BJ (cell line): ENCODE measurements at regions of chr19 and their contacts with region 1.

Region 1: DNA sequence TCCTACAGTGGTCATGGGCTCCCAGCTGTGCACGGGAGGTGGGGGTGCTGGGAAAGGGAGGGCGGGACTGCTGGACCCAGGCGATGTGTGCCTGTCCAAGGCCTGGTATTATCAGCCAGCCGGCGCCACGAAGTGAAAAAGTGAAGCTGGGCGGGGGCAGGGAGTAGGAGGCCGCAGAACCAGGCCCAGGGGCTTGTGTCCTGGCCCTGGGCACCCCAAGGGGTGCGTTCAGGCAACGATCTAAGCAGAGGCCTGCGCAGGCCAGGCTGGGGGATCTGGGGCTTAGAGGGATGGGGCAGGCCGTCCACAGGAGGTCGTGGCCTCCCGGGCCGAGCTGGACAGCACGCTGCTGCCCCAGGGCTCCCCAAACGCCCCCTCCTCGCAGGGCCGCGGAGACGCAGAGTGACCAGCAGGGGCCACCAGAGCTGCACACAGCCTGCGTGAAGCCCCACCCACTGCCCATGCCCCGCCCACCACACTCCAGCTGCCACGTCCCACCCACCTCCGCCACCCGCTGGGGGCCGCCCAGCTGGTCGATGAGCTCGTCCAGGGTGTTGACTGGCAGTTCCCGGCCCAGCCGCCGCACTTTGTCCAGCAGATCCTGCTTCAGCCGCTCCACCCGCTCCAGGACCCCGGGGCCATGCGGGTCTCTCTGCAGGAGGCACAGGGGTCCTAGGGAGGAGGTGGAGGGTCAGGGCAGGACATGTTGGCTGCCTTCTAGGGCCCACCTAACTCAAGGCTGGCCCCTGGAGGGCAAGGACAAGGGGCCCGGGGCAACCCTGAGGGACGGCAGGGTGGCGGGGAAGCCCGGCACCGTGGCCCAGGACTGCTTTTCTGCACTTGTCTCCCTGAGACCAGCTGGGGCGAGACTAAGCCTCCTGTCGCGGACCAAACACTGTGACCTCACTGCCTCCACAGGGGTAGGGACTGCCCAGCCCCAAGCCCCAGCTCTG is 9.5 kb downstream of the GPX4 start:
- DNase-seq: peak; percentile 36
- H3K4me3 ChIP-seq: no peak overlapping the region
- H3K27me3 ChIP-seq: no peaks in the 10 kb centered on the region
- CTCF ChIP-seq: peak; percentile 85

Region 2: DNA sequence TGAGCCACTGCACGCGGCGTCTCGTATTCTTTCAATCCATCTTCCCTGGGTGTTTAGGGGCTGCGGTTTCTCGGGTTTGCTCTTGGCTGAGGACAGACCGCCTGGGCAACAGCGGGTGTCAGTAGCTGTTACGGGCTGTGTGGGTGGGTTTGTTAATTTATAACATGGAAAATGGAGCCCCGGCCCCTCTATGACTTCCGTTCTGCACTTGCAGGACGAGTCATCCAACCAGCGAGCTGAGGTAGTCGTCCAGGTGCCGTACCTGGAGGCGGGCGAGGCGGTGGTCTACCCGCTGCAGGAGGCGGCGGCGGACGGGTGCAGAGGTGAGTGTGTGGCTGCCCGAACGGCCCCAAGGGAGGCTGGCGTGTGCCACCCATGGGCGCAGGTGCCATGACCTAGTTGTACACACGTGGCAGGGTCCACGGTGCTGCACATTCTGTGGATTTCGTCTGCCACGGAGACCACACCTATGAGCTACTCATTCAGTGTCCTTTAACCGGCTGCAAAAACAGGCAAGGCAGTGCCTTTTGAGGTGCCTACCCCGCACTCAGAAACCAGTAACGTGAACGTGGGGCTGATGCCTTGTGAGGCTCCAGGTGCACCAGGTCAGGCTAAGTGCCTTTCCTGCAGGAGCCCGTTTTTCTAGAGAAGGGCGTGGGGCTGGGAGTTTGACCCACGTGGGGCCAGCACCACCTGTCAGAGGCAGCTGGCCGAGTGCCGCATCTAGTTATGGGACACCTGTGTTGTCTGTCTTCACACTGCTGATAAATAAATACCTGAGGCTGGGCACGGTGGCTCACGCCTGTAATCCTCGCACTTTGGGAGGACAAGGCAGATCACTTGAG is 29.1 kb before region 1 on chr19:
- CTCF ChIA-PET with region 1: no interaction called
- POLR2A ChIA-PET with region 1: no interaction called
- DNase-seq: no peak
- H3K4me3 ChIP-seq: no peak overlapping the region
- H3K27me3 ChIP-seq: no peaks in the 10 kb centered on the region
- CTCF ChIP-seq: no peak

Region 3: DNA sequence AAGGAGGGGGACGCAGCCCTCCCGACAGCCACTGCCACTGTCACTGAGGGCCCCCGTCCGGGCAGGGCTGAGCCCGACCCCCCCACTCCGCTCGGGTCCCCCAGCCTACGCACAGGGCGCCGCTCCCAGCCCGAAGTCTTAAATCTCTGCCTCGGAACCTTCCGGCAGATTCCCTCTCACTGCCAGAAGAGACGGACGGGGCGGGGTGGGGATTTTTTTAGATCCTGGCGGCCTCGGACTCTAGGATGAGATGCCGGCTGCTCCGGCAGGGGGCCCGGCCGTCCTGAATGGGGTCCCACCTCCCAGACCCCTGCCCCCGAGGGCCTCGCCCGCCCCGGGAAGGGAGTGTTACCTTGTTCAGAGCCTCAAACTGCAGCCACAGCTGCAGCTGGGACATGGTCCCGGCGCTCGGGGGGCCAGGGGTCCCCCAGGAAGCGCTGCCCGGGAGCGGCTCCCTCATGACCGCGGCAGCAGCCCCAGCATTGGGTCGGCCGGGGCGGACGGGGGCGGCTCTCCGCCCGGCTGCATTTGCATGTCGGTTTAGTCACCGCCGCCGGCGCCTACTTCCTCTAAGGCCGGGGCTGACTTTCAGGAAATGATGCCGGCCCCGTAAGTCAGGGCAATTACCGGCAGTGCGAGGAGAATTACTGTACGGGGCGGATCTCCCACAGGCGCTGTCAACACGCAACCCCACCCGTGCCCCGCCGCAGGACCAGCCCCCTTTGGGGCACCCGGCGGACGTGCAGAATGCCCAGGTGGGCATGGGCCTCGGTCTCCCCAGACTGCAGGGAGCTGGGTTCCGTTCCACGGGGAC is 18.6 kb after region 1 on chr19:
- CTCF ChIA-PET with region 1: interaction called, 13 read pairs
- POLR2A ChIA-PET with region 1: no interaction called
- DNase-seq: peak; percentile 52
- H3K4me3 ChIP-seq: peak overlapping the region; percentile 88
- H3K27me3 ChIP-seq: no peaks in the 10 kb centered on the region
- CTCF ChIP-seq: 0 out of 2 replicates have a peak, but pooled peaks have one; percentile 24

Region 4: GRCh38 chr19:1177322-1178114 is 64.2 kb after region 1 on chr19:
- CTCF ChIA-PET with region 1: interaction called, 12 read pairs
- POLR2A ChIA-PET with region 1: interaction called, 3 read pairs
- DNase-seq: peak; percentile 86
- H3K4me3 ChIP-seq: no peak overlapping the region
- H3K27me3 ChIP-seq: no peaks in the 10 kb centered on the region
- CTCF ChIP-seq: peak; percentile 35

Region 5: DNA sequence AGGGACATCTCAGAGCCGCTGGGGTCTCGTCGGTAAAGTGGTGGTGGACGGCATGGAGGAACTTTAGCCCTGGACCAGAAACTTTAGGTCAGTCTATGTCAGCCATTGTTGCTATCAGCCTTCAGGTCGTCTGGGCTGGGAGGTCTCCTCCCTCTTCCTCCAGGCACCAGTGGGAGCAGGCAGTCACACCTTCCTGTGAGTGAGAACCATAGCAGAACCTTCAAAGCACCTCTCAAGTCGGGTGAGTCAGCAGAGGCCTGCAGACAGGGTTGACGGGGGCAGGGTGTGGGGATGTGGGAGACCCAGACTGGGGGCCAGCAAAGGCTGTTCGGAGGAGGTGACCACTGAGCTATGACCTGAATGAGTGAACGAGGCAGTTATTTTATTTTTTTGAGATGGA is 76.1 kb after region 1 on chr19:
- CTCF ChIA-PET with region 1: interaction called, 30 read pairs
- POLR2A ChIA-PET with region 1: no interaction called
- DNase-seq: no peak
- H3K4me3 ChIP-seq: no peak overlapping the region
- H3K27me3 ChIP-seq: no peaks in the 10 kb centered on the region
- CTCF ChIP-seq: no peak

Region 6: DNA sequence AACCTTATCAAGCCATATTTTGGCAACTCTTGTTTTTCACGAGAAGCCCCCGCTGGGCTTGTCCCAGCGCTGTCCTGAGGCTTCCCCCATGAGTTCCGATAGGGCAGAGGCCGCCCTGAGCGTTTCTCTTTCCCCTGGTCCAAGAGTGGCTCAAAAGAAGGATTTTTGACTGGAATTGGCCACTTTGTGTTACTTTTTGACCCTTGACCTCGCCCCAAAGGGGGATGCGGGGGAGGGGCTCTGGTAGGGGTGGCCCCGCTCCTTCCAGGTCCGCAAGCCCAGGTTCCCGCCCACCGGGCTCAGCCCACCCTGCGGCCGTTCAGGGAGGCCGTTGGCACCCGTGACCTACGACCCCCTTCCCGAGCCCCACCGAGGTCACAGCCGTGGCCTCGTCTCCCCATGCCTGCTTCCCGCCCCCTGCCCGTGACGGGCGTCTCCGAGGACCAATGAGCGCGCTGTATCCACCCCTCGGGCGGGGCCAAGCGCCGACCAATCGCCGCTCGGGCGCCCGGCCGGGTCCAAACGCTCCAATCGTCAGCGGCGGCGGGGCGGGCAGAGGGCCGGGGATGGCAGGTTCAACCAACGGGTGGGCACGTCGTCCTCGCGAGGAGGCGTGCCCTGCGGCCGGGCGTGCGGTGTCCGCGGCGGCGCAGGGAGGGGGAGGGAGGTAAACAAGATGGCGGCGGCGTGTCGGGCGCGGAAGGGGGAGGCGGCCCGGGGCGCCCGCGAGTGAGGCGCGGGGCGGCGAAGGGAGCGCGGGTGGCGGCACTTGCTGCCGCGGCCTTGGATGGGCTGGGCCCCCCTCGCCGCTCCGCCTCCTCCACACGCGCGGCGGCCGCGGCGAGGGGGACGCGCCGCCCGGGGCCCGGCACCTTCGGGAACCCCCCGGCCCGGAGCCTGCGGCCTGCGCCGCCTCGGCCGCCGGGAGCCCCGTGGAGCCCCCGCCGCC is 92.1 kb after region 1 on chr19 and contains the start of gene STK11:
- CTCF ChIA-PET with region 1: interaction called, 17 read pairs
- POLR2A ChIA-PET with region 1: no interaction called
- DNase-seq: peak; percentile 73
- H3K4me3 ChIP-seq: peak within 1 kb of the TSS; percentile 81
- H3K27me3 ChIP-seq: no peaks in the 10 kb centered on the region
- CTCF ChIP-seq: no peak
- polyA plus RNA-seq, gene STK11: 26.3 and 33.6 TPM in 2 replicates